ENCODE measurements at regions of chr1 and their contacts with region 1.

Region 1: GRCh38 chr1:193479187-193479586 is 292.8 kb upstream of the B3GALT2 start:
- DNase-seq: peak; percentile 18 to 95 (median 91)
- ATAC-seq: peak; percentile 97
- H3K4me3 ChIP-seq: peak overlapping the region; percentile 24
- H3K4me3 Mint-ChIP-seq: peak overlapping the region; percentile 23 to 72 (median 60)
- H3K27ac ChIP-seq: peak overlapping the region; percentile 37
- H3K27ac Mint-ChIP-seq: peak overlapping the region; percentile 85 to 99 (median 94)
- H3K4me1 ChIP-seq: peaks cover 31 to 38% of the 10 kb centered on the region in 2 donors
- H3K4me1 Mint-ChIP-seq: peaks cover 27 to 72% (median 56%) of the 10 kb centered on the region in 7 donors
- H3K27me3 ChIP-seq: no peaks in the 10 kb centered on the region
- H3K27me3 Mint-ChIP-seq: no peaks in the 10 kb centered on the region

Region 2: GRCh38 chr1:193031438-193031837 is 447.7 kb before region 1 on chr1:
- CTCF ChIA-PET with region 1: no interaction called
- POLR2A ChIA-PET with region 1: no interaction called
- intact Hi-C with region 1: no loop called
- DNase-seq: peak in 1 of 9 donors; percentile 2
- ATAC-seq: peak; percentile 54
- H3K4me3 ChIP-seq: no peak overlapping the region
- H3K4me3 Mint-ChIP-seq: no peak overlapping the region
- H3K27ac ChIP-seq: no peak overlapping the region
- H3K27ac Mint-ChIP-seq: no peak overlapping the region
- H3K4me1 ChIP-seq: no peaks in the 10 kb centered on the region
- H3K4me1 Mint-ChIP-seq: peaks cover 10 to 31% (median 29%) of the 10 kb centered on the region in 7 donors
- H3K27me3 ChIP-seq: no peaks in the 10 kb centered on the region
- H3K27me3 Mint-ChIP-seq: no peaks in the 10 kb centered on the region

Region 3: DNA sequence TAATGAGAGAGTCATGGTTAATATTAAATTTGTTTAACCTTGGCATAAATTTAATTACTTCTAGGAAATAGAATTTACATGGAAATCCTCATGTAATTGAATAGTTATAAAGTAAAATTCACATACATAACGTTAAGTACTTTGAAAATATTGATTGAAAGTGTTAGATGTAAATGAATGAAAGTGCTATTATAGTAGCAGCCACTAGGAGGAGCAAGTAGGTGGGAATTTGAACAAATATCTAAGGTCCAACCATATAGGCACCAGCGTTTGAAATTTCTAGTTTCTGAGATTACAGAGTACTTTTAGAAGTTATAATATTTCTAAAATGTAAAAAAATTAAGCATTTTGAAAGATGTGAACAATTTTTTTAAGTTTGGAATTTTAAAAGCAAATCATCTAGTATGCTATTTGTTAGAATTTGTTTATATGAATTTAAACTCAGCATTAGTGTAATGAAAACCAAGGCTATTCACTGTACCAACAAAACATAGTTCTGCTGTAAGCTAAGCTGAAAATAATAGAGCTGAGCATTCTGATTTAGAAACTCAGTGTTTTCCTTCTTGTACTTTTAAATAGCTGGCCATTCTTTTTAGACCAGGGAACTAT is 296.1 kb before region 1 on chr1:
- CTCF ChIA-PET with region 1: no interaction called
- POLR2A ChIA-PET with region 1: no interaction called
- intact Hi-C with region 1: loop called in 1 of 2 experiments (anchors 5 kb)
- DNase-seq: peak in 7 of 9 donors; percentile 21 to 62 (median 56)
- ATAC-seq: peak; percentile 85
- H3K4me3 ChIP-seq: no peak overlapping the region
- H3K4me3 Mint-ChIP-seq: no peak overlapping the region
- H3K27ac ChIP-seq: no peak overlapping the region
- H3K27ac Mint-ChIP-seq: no peak overlapping the region
- H3K4me1 ChIP-seq: peaks cover 0 to 8% of the 10 kb centered on the region in 2 donors
- H3K4me1 Mint-ChIP-seq: peaks cover 24 to 77% (median 58%) of the 10 kb centered on the region in 7 donors
- H3K27me3 ChIP-seq: no peaks in the 10 kb centered on the region
- H3K27me3 Mint-ChIP-seq: no peaks in the 10 kb centered on the region

Region 4: DNA sequence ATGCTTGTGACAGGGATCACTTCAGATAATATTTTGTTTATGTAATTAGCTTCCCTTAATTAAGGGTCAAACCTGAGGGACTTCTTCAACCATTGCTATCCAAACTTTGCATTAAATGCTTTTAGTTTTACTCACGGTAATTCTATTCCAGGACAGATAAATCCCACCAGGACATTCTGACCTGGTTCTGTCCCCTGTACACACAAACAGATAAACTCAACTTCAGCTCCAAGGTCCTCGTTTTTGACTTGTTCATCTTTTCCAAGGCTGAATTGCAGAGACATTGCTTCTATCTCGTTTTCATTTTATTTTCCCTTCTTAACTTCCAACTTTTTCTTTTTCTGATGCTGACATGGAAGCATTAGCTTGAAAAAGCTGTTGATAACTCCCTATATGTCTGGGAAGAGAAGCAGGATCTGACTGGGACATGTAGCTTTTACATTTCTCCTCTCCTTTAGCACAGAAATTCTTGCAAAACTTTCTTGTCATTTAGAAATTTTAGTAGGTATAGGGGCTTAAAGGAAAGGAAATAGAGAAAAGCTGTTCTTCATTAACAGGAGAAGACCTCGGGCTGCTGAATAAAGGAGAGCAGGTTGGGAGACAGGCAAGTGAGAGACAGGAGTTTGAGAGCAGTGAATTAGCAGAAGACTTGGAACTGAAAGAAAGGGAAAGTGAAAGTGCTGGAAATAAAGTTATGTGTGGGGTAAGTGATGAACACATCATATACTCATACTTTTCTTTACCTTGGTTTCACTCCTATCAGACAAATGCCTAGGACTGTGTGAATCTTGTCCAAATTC is 61.0 kb before region 1 on chr1:
- CTCF ChIA-PET with region 1: no interaction called
- POLR2A ChIA-PET with region 1: interaction called, 4 read pairs
- intact Hi-C with region 1: loop called in 1 of 2 experiments (anchors 1 kb)
- DNase-seq: peak in 7 of 9 donors; percentile 16 to 64 (median 47)
- ATAC-seq: peak; percentile 81
- H3K4me3 ChIP-seq: peak overlapping the region; percentile 45
- H3K4me3 Mint-ChIP-seq: peak overlapping the region; percentile 68 to 93 (median 87)
- H3K27ac ChIP-seq: peak overlapping the region; percentile 58
- H3K27ac Mint-ChIP-seq: peak overlapping the region; percentile 88 to 95 (median 91)
- H3K4me1 ChIP-seq: peaks cover 16 to 19% of the 10 kb centered on the region in 2 donors
- H3K4me1 Mint-ChIP-seq: peaks cover 15 to 57% (median 46%) of the 10 kb centered on the region in 7 donors
- H3K27me3 ChIP-seq: no peaks in the 10 kb centered on the region
- H3K27me3 Mint-ChIP-seq: no peaks in the 10 kb centered on the region

Region 5: GRCh38 chr1:193462629-193463320 is 16.4 kb before region 1 on chr1:
- CTCF ChIA-PET with region 1: no interaction called
- POLR2A ChIA-PET with region 1: interaction called, 6 read pairs
- intact Hi-C with region 1: loop called (anchors 1 to 2 kb)
- DNase-seq: peak in 3 of 9 donors; percentile 3 to 33 (median 20)
- ATAC-seq: peak; percentile 72
- H3K4me3 ChIP-seq: peak overlapping the region; percentile 19
- H3K4me3 Mint-ChIP-seq: peak overlapping the region; percentile 3 to 82 (median 72)
- H3K27ac ChIP-seq: no peak overlapping the region
- H3K27ac Mint-ChIP-seq: peak overlapping the region; percentile 28 to 87 (median 65)
- H3K4me1 ChIP-seq: peaks cover 12 to 20% of the 10 kb centered on the region in 2 donors
- H3K4me1 Mint-ChIP-seq: peaks cover 18 to 41% (median 35%) of the 10 kb centered on the region in 7 donors
- H3K27me3 ChIP-seq: no peaks in the 10 kb centered on the region
- H3K27me3 Mint-ChIP-seq: no peaks in the 10 kb centered on the region

Region 6: GRCh38 chr1:193569096-193569982 is 90.2 kb after region 1 on chr1:
- CTCF ChIA-PET with region 1: no interaction called
- POLR2A ChIA-PET with region 1: no interaction called
- intact Hi-C with region 1: loop called in 1 of 2 experiments (anchors 1 kb)
- DNase-seq: peak in 4 of 9 donors; percentile 2 to 31 (median 16)
- ATAC-seq: peak; percentile 67
- H3K4me3 ChIP-seq: no peak overlapping the region
- H3K4me3 Mint-ChIP-seq: peak overlapping the region in 5 of 10 donors; percentile 4 to 63 (median 23)
- H3K27ac ChIP-seq: no peak overlapping the region
- H3K27ac Mint-ChIP-seq: peak overlapping the region in 6 of 9 donors; percentile 34 to 89 (median 78)
- H3K4me1 ChIP-seq: peaks cover 4 to 16% of the 10 kb centered on the region in 2 donors
- H3K4me1 Mint-ChIP-seq: peaks cover 12 to 24% (median 19%) of the 10 kb centered on the region in 7 donors
- H3K27me3 ChIP-seq: no peaks in the 10 kb centered on the region
- H3K27me3 Mint-ChIP-seq: no peaks in the 10 kb centered on the region

Region 7: DNA sequence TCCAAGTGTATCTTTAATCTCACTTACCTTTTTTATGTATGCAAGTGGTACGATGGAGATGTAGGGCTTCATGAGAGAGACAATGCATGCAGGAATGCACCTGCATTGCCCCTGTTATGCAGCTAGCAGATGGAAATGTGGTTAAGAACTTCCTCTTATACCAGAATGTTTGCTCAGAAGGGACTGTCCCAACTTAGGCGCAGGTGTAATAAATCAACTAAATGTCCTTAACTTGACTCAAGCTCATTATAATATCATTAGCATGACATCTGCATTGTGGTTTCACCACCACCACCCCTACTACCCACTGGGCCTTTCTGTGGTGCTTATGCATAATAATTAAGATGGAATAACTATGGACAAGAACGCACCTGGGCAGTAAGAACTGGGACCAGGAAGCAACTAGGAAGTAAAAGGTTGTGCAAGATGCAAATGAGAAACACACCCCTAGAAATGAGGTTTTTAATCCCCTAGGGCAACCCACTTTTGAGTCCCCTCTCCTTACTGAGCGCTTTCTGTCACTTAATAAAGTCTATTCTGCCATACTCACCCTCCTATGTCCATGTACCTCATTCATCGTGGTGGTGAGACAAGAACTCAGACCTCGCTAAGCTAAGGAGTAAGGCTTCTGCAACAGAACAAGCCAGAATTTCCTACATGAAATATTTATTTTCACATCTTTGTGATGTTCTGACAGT is 810.5 kb after region 1 on chr1:
- CTCF ChIA-PET with region 1: no interaction called
- POLR2A ChIA-PET with region 1: no interaction called
- intact Hi-C with region 1: loop called (anchors 1 to 10 kb)
- DNase-seq: peak in 8 of 9 donors; percentile 23 to 84 (median 76)
- ATAC-seq: peak; percentile 97
- H3K4me3 ChIP-seq: peak overlapping the region; percentile 0
- H3K4me3 Mint-ChIP-seq: peak overlapping the region; percentile 38 to 71 (median 54)
- H3K27ac ChIP-seq: no peak overlapping the region
- H3K27ac Mint-ChIP-seq: peak overlapping the region in 7 of 9 donors; percentile 43 to 84 (median 69)
- H3K4me1 ChIP-seq: peaks cover 14 to 21% of the 10 kb centered on the region in 2 donors
- H3K4me1 Mint-ChIP-seq: peaks cover 5 to 47% (median 40%) of the 10 kb centered on the region in 7 donors
- H3K27me3 ChIP-seq: no peaks in the 10 kb centered on the region
- H3K27me3 Mint-ChIP-seq: no peaks in the 10 kb centered on the region

Measured in naive thymus-derived CD4-positive, alpha-beta T cell (primary cell).